RWPE1 (cell line): ENCODE measurements at regions of chr19 and their contacts with region 1.

Region 1: DNA sequence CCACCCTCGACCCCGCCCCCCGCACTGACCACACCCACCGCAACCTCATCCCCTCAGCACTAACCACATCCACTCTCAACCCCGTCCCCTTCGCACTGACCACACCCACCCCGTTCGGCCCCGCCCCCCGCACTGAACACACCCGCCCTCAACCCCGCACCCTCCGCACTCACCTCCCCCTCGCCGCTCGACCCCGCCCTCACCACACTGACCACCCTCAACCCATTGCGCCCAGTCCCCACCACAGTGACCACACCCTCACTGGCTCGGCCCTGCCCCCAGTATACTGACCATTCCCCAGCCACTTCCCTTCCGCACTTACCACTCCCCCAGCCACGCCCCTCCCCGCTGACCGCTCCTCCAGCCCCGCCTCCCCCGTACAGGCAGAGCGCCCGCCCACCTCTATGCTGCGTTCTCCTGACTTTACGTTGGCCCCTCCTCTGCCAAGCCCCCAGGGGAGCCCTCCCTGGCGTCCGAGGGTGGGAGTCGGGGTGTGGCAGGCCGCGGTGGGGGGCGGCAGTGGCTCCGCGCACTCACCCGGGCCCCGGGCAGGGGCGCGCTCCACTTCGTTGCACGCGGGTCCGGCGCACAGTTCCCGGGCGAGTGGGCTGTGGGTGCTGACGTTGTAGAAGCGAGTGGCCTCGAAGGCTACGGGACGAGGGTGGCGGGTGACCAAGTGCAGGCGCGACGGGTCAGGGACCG is 8.5 kb downstream of the F2RL3 start:
- DNase-seq: peak; percentile 99
- H3K27ac ChIP-seq: peak overlapping the region; percentile 63
- CTCF ChIP-seq: no peak

Region 2: GRCh38 chr19:17135001-17135853 is 237.9 kb after region 1 on chr19:
- CTCF ChIA-PET with region 1: no interaction called
- POLR2A ChIA-PET with region 1: no interaction called
- DNase-seq: peak; percentile 86
- H3K27ac ChIP-seq: peak overlapping the region; percentile 95
- CTCF ChIP-seq: no peak

Region 3: DNA sequence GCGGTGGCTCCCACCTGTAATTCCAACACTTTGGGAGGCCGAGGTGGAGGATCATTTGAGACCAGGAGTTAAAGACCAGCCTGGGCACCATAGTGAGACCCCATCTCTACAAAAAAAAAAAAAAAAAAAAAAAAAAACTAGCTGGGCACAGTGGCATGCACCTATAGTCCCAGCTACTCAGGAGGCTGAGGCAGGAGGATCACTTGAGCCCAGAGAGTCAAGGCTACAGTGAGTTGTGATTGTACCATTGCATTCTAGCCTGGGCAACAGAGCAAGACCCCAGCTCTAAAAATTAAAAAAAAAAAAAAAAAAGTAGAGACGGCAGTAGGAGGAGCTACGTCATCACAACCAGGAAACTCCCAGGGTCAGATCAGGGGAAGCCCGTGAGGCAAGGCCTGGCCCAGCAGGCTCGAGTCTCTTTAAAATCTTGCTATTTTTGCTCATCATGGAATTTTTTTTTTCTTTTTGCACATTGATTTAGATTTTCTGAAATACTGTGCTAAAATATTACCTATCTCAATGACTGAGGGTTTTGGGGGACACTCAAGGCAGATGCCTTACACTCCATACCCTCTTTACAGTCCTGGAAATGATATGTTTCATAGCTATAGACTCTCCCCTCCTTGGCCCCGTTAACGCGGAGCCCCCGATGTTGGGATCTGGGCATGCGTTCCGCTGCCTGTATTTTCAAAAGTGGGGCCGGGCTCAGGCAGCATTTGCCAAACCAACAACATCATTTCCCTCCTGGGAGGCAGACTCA is 273.4 kb after region 1 on chr19:
- CTCF ChIA-PET with region 1: interaction called, 11 read pairs
- POLR2A ChIA-PET with region 1: no interaction called
- DNase-seq: no peak
- H3K27ac ChIP-seq: no peak overlapping the region
- CTCF ChIP-seq: no peak